ENCODE measurements at regions of chr1 and their contacts with region 1.

Region 1: GRCh38 chr1:204089044-204089751 is 16.3 kb downstream of the SOX13 start:
- DNase-seq: peak; percentile 80 to 91
- H3K4me3 ChIP-seq: no peak overlapping the region
- CTCF ChIP-seq: no peak
- POLR2A ChIP-seq: no peak

Region 2: GRCh38 chr1:203135636-203136305 is 953.4 kb before region 1 on chr1:
- intact Hi-C with region 1: loop called (anchors 5 kb)
- DNase-seq: no peak
- H3K4me3 ChIP-seq: no peak overlapping the region
- CTCF ChIP-seq: no peak
- POLR2A ChIP-seq: no peak

Region 3: GRCh38 chr1:203996126-203996525 is 93.1 kb before region 1 on chr1:
- intact Hi-C with region 1: no loop called
- DNase-seq: peak in 1 of 2 donors; percentile 23
- H3K4me3 ChIP-seq: no peak overlapping the region
- CTCF ChIP-seq: no peak
- POLR2A ChIP-seq: no peak

Region 4: GRCh38 chr1:205042911-205043806 is 954.0 kb after region 1 on chr1 and contains the start of gene CNTN2:
- intact Hi-C with region 1: no loop called
- DNase-seq: no peak
- H3K4me3 ChIP-seq: no peak within 1 kb of the TSS
- CTCF ChIP-seq: no peak
- POLR2A ChIP-seq: no peak
- total RNA-seq, gene CNTN2: 2.7 to 18.3 (median 6.0) TPM

Measured in lower leg skin (tissue), 4 donors.